Heart right ventricle (tissue), 16 donors: ENCODE measurements at regions of chr16 and their contacts with region 1.

Region 1: DNA sequence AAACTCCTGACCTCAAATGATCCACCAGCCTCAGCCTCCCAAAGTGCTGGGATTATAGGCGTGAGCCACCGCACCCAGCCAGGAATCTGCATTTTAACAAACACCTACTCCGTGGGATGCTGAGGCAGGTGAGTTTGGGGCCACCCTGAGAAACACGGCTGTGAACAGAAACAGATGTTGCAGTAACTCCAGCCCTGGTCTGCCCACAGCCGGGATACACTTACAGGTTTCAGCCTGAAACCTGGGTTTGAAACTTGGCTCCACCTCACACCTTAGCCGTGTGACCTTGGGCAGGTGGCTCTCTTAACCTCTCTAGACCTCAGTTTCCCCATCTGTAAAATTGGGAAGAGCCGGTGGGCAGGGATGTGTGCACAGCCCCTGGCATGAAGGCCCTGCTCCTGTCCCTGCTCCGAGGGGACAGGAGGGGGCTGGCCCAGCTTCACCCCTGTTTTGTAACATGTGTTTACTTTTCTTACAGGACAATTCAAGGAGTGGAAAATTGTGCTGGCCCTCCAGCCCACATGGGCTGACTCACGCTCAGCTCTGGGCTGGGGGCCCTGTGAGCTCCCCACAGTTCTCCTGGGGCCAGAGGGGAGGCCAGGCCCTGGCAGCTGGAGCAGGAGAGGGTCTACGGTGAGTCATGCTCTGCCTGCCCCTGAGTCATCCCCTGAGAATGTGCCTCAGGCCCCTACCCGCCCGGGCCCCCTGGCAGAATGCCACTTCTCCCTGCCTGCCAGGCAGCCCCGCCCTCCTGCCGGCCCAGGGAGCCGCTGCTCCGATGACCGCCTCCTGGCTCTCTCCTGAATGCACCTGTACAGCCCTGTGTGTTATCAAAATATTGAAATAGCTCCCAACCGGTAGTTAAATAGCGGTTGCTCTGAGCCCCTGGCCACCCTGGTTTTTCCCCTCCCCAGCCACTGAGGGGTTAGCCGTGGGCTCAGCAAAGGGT is 7.7 kb upstream of the PPL start:
- DNase-seq: peak; percentile 80 to 86
- ATAC-seq: peak; percentile 79 to 92 (median 88)
- H3K4me3 ChIP-seq: no peak overlapping the region
- H3K27ac ChIP-seq: peak overlapping the region in 8 of 10 donors; percentile 11 to 78 (median 66)
- H3K4me1 ChIP-seq: peaks cover 4 to 49% (median 30%) of the 10 kb centered on the region in 9 donors
- H3K27me3 ChIP-seq: peaks cover 0 to 3% (median 0%) of the 10 kb centered on the region in 7 donors
- CTCF ChIP-seq: no peak

Region 2: DNA sequence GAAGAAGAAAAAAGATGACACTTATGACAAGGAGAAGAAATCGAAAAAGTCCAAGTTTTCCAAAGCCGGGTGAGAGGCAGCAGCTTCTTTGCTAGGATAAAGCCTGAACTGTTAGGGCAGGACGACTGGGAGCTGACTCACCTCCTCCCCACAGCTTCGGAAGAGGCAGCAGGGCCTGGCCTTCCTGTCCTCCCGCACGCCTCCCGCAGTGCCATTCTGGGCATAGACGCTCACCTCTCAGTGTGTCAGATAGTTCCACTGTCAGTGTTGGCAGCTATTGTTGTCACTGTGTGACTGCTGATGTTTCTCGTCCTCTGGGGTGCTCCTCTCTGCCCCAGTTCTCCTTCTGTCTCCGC is 84.7 kb before region 1 on chr16:
- intact Hi-C with region 1: no loop called
- DNase-seq: no peak
- ATAC-seq: peak in 6 of 8 donors; percentile 54 to 76 (median 64)
- H3K4me3 ChIP-seq: no peak overlapping the region
- H3K27ac ChIP-seq: peak overlapping the region in 8 of 10 donors; percentile 17 to 65 (median 38)
- H3K4me1 ChIP-seq: peaks cover 0 to 49% (median 21%) of the 10 kb centered on the region in 9 donors
- H3K27me3 ChIP-seq: no peaks in the 10 kb centered on the region
- CTCF ChIP-seq: no peak

Region 3: GRCh38 chr16:4870138-4870671 is 74.4 kb before region 1 on chr16:
- intact Hi-C with region 1: loop called in 1 of 10 experiments (anchors 5 kb)
- DNase-seq: no peak
- ATAC-seq: peak in 1 of 8 donors; percentile 23
- H3K4me3 ChIP-seq: no peak overlapping the region
- H3K27ac ChIP-seq: no peak overlapping the region
- H3K4me1 ChIP-seq: peaks cover 0 to 26% (median 13%) of the 10 kb centered on the region in 9 donors
- H3K27me3 ChIP-seq: no peaks in the 10 kb centered on the region
- CTCF ChIP-seq: no peak

Region 4: DNA sequence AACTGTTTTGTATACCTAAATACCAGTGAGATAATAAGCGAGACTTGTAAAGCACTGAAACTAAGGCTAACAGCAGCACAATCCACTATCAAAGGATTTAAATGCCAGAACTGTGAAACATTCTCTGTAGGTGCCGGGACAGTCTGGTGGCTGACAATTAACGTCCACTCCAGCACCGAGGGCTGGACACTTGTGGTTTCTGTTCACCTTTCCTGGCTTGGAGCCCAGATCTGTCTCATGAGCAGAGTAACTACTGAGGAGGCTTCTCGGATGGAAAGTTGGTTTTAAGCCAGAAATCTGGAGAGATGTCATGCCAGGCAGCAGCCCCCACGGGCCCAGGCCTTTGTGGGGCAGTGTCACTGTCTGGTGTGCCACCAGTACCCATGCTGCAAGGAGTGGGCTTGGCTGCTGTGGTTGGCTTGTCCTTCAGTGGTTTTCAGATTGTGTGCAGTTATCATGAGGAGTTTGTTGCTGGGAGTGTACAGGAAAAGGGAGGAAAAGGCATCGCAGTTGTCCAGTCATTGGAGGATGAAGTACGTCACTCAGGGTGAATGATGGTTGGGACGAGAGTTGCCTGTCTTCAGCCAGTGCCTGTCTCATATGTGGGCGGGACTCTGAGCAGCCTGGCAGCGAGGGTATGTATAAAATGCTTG is 61.8 kb before region 1 on chr16:
- intact Hi-C with region 1: loop called in 1 of 10 experiments (anchors 10 kb)
- DNase-seq: peak in 1 of 2 donors; percentile 57
- ATAC-seq: peak; percentile 29 to 86 (median 73)
- H3K4me3 ChIP-seq: no peak overlapping the region
- H3K27ac ChIP-seq: peak overlapping the region in 6 of 10 donors; percentile 15 to 60 (median 38)
- H3K4me1 ChIP-seq: peaks cover 0 to 25% (median 12%) of the 10 kb centered on the region in 9 donors
- H3K27me3 ChIP-seq: no peaks in the 10 kb centered on the region
- CTCF ChIP-seq: no peak

Region 5: DNA sequence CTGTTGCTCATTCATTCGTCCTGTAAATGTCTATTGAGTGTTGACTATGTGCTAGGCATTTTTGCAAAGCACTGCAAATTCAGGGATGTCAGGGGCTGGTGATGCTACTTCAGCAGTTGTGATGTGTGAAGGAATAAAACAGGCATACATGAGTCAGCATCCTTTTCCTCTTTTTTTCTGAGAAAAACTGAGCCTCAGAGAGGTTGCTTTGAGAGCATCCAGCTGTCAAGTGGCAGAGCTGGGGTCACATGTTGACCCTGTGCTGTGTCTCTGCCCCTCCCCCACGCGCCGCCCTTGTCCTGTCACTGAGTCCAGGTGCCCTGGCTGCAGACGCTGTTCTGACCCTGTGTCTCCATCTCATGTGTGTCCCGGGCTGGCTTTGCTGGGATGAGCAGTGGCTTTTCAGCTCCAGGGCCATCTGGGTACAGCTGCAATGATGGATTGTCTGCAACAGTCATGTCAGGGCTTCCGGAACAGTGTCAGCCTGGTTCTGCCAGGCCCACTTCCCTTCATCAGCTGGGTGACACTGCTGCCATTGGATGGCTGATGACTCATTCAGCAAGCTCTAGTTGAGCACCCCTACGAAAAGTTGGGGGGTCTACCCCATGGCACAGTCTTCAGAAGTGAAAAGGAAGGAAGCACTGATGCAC is 28.5 kb after region 1 on chr16:
- intact Hi-C with region 1: no loop called
- DNase-seq: no peak
- ATAC-seq: no peak
- H3K4me3 ChIP-seq: no peak overlapping the region
- H3K27ac ChIP-seq: no peak overlapping the region
- H3K4me1 ChIP-seq: peaks cover 0 to 4% (median 0%) of the 10 kb centered on the region in 9 donors
- H3K27me3 ChIP-seq: peaks cover 0 to 9% (median 0%) of the 10 kb centered on the region in 7 donors
- CTCF ChIP-seq: no peak